ENCODE measurements at regions of chr11 and their contacts with region 1.

Region 1: GRCh38 chr11:93652161-93652597 is 9.3 kb upstream of the CEP295 start:
- DNase-seq: no peak
- ATAC-seq: no peak
- H3K4me3 ChIP-seq: no peak overlapping the region
- H3K27ac ChIP-seq: no peak overlapping the region
- H3K4me1 ChIP-seq: no peaks in the 10 kb centered on the region
- H3K27me3 ChIP-seq: peaks cover 0 to 2% of the 10 kb centered on the region in 2 donors

Region 2: DNA sequence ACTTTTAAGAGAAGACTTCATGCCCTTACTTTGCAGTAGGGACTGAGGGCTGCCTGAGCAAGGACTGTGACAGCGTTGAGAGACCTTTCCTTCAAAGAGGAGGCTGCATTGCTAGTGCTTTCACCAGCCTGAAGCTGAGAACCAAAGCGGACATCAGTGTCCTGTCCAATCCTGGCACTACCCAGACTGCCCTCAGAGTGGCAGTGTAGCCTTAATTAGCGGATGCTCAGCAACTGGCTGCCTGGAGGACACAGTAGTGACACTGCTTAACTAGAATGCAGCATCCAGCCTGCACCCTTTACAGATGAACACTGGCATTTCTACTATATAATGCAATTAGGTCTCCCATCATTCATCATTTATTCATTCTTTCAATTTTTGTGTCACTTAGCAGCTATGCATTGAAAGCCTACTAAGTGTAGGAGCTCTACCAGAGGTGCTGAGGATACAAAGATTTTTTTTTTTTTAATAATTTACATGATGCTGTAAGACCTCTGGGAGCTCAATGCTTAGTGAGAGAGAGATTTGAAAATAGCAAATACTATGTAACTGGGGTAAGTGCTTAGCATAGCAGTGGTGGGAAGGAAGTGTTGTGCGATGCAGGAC is 417.5 kb before region 1 on chr11:
- intact Hi-C with region 1: loop called (anchors 1 kb)
- DNase-seq: peak; percentile 83 to 89
- ATAC-seq: peak; percentile 95
- H3K4me3 ChIP-seq: no peak overlapping the region
- H3K27ac ChIP-seq: no peak overlapping the region
- H3K4me1 ChIP-seq: no peaks in the 10 kb centered on the region
- H3K27me3 ChIP-seq: no peaks in the 10 kb centered on the region

Region 3: GRCh38 chr11:93614173-93614722 is 37.9 kb before region 1 on chr11:
- intact Hi-C with region 1: no loop called
- DNase-seq: no peak
- ATAC-seq: no peak
- H3K4me3 ChIP-seq: no peak overlapping the region
- H3K27ac ChIP-seq: no peak overlapping the region
- H3K4me1 ChIP-seq: no peaks in the 10 kb centered on the region
- H3K27me3 ChIP-seq: no peaks in the 10 kb centered on the region

Measured in aorta (tissue), 5 donors.